ENCODE measurements at regions of chr4 and their contacts with region 1.

Region 1: DNA sequence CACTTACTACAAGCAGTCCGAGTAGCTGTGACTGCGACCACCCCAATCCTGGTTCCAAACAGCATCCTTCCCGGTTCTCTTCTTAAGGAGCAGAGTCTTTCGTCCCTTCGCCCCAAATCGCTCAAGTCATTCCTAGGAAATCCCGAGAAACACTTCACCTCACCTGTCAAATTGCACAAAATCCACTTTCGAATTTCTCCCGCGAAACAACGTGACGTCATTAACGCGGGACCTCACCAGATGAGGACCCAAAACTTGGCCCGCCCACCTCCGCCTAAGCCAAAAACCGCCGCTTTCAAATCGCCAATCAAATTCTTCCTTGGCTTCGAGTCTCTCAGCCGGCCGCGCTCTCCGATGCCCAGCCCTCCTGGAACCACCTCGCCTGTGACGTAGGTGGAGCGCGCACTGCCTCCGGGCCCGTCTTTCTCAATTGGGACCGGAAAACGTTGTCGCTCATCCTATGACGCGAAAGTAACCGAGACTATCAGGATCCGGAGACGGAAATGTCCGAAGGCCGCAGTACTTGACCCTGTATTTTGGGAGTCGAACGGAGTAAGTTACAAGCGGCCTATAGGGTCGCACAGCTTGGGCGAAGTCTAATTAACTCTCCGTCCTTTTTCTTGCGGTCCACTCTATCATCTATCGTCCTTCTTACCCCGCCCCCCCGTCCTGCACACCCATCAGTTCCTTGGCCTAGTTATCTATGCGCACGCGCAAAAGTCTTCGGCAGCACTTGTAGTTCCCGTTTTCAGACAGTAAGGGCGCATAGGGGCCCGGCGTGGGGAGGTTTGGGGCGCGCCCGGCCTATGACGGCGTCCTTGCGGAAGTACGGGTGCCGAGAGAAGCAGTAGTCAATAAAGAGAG is at the starts of genes LARP7 and ZGRF1:
- DNase-seq: peak; percentile 97
- H3K4me3 Mint-ChIP-seq: no peak within 1 kb of the TSS
- H3K27ac Mint-ChIP-seq: no peak within 1 kb of the TSS
- H3K4me1 Mint-ChIP-seq: peaks cover 29% of the 10 kb centered on the region
- H3K27me3 Mint-ChIP-seq: no peaks in the 10 kb centered on the region
- total RNA-seq, gene LARP7: 44.0 and 45.3 TPM in 2 replicates
- total RNA-seq, gene ZGRF1: 30.0 and 30.4 TPM in 2 replicates

Region 2: GRCh38 chr4:112817933-112818593 is 181.1 kb after region 1 on chr4:
- intact Hi-C with region 1: loop called (anchors 2 kb)
- DNase-seq: peak; percentile 26
- H3K4me3 Mint-ChIP-seq: peak overlapping the region; percentile 87
- H3K27ac Mint-ChIP-seq: peak overlapping the region; percentile 81
- H3K4me1 Mint-ChIP-seq: peaks cover 24% of the 10 kb centered on the region
- H3K27me3 Mint-ChIP-seq: peaks cover 5% of the 10 kb centered on the region

Region 3: DNA sequence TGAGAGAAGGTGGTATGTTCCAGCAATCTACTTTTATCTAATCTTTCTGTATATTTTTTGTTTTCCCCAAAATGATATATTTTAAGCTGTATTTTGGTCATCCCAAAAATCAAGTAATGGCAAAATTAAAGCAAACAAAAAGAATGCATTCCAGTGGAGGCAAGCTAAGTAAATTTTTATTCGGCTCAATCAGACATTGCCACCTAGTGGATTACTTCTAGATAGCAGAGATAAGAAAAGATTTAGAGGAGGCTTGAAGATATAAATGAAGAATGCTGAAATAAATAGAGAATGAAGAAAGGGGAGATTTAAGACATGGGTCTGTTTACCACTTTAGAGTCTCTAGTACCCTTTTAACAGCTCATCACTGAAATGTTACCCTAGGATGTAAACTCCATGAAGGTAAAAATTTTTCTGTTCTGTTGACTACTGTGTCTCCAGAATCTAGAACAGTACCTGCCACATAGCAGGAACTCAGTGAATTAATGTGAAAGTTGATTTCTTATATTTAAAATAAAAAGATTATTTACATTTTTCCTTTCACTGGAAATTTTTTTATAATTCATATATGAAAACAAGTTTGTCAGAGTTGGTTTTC is 301.6 kb after region 1 on chr4:
- intact Hi-C with region 1: loop called (anchors 1 kb)
- DNase-seq: no peak
- H3K4me3 Mint-ChIP-seq: no peak overlapping the region
- H3K27ac Mint-ChIP-seq: no peak overlapping the region
- H3K4me1 Mint-ChIP-seq: no peaks in the 10 kb centered on the region
- H3K27me3 Mint-ChIP-seq: peaks cover 4% of the 10 kb centered on the region

Measured in activated T-helper 2 cell treated with anti-CD3 and anti-CD28 coated beads, Interferon-gamma antibody, Interleukin-2, Interleukin-4, amounts not matched to agents 10 μg/mL and 5 μg/mL and 100 μg/mL, durations not matched to agents 14 hours and 24 hours and 36 hours (primary cell).